ENCODE measurements at regions of chr6 and their contacts with region 1.

Region 1: DNA sequence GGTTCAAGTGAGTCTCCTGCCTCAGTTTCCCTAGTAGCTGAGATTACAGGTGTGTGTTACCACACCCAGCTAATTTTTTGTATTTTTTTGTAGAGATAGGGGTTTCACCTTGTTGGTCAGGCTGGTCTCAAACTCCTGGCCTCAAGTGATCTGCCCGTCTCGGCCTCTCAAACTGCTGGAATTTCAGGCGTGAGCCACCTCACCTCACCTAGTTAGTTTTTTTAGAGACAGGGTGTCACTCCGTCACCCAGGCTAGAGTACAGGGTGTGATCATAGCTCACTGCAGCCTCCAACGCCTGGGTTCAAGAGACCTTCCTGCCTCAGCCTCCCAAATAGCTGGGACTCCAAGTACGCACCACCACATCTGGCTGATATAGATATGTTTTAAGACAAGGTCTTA is 22.9 kb downstream of the SYTL3 start:
- DNase-seq: no peak
- H3K4me3 Mint-ChIP-seq: no peak overlapping the region
- H3K27ac Mint-ChIP-seq: no peak overlapping the region
- H3K4me1 Mint-ChIP-seq: peaks cover 10% of the 10 kb centered on the region
- H3K27me3 Mint-ChIP-seq: no peaks in the 10 kb centered on the region

Region 2: DNA sequence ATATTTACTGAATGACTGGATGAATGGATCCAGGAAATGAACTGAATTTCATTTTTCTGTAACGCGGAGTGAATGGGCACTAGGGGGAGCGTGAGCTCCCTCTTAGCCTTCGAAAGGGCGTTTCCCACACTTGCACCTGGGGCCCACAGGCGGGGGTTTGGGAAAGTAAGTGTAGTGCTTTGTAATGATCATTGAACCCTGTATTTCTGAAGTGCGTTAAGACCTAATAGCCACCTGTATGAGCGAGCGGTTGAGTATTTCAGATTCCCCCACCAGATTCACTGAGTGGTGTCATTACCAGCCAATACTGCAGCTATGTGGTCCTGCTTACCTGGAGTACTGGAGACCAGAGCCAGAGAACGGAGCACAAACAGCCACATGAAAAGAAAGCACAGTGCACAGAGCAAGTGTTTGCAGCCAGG is 12.4 kb before region 1 on chr6:
- CTCF ChIA-PET with region 1: interaction called, 10 read pairs
- intact Hi-C with region 1: no loop called
- DNase-seq: peak; percentile 68
- H3K4me3 Mint-ChIP-seq: no peak overlapping the region
- H3K27ac Mint-ChIP-seq: no peak overlapping the region
- H3K4me1 Mint-ChIP-seq: peaks cover 69% of the 10 kb centered on the region
- H3K27me3 Mint-ChIP-seq: no peaks in the 10 kb centered on the region

Region 3: DNA sequence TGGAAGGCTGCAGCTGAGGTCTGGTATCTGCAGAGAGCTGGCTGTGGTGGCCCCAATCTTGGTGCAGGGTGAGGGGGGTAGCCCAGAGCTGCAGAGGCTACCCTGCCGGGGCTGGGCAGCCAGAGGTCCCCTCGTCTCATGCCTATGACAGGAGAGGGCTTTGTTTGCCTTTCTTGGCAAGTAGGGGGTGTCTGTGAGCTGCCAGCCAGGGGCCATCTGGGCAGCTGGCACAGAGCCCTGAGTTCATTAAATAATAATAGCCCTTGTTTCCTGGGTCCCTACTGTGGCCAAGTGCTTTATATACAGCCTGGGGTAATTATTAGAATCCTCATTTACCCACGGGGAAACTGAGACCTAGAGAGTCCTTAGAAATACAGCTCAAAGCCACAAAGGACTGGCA is 79.9 kb after region 1 on chr6:
- CTCF ChIA-PET with region 1: no interaction called
- intact Hi-C with region 1: no loop called
- DNase-seq: no peak
- H3K4me3 Mint-ChIP-seq: no peak overlapping the region
- H3K27ac Mint-ChIP-seq: no peak overlapping the region
- H3K4me1 Mint-ChIP-seq: no peaks in the 10 kb centered on the region
- H3K27me3 Mint-ChIP-seq: no peaks in the 10 kb centered on the region

Measured in activated naive CD4-positive, alpha-beta T cell treated with anti-CD3 and anti-CD28 coated beads for 36 hours (primary cell).